Heart left ventricle (tissue), 16 donors: ENCODE measurements at regions of chr11 and their contacts with region 1.

Region 1: DNA sequence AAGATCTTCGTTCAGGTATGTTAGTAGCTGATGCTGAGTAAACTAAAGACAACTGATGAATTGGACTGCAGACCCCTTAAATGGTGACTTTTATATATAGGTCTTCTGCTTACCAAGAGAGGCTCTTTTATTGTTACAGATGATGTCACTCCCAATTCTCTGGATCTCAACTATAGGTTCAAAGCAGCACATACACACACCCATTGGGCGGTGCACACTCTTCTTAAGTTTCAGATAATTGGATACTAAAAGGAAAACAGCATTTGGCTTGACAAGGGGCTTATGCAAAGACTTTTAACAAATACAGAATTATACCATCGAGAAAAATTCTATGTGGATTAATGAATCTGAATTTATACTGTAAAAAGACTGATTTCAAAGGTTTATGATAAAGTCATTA is at the start of gene PTH:
- DNase-seq: no peak
- ATAC-seq: no peak
- H3K4me3 ChIP-seq: no peak within 1 kb of the TSS
- H3K27ac ChIP-seq: no peak within 1 kb of the TSS
- H3K4me1 ChIP-seq: no peaks in the 10 kb centered on the region
- H3K27me3 ChIP-seq: peaks cover 0 to 16% (median 0%) of the 10 kb centered on the region in 9 donors
- CTCF ChIP-seq: no peak
- POLR2A ChIP-seq: no peak
- total RNA-seq, gene PTH: not detected

Region 2: GRCh38 chr11:13550761-13551160 is 54.8 kb after region 1 on chr11:
- intact Hi-C with region 1: loop called in 1 of 10 experiments (anchors 5 kb)
- DNase-seq: no peak
- ATAC-seq: no peak
- H3K4me3 ChIP-seq: no peak overlapping the region
- H3K27ac ChIP-seq: no peak overlapping the region
- H3K4me1 ChIP-seq: no peaks in the 10 kb centered on the region
- H3K27me3 ChIP-seq: no peaks in the 10 kb centered on the region
- CTCF ChIP-seq: no peak
- POLR2A ChIP-seq: no peak